ENCODE measurements at regions of chr5 and their contacts with region 1.

Region 1: DNA sequence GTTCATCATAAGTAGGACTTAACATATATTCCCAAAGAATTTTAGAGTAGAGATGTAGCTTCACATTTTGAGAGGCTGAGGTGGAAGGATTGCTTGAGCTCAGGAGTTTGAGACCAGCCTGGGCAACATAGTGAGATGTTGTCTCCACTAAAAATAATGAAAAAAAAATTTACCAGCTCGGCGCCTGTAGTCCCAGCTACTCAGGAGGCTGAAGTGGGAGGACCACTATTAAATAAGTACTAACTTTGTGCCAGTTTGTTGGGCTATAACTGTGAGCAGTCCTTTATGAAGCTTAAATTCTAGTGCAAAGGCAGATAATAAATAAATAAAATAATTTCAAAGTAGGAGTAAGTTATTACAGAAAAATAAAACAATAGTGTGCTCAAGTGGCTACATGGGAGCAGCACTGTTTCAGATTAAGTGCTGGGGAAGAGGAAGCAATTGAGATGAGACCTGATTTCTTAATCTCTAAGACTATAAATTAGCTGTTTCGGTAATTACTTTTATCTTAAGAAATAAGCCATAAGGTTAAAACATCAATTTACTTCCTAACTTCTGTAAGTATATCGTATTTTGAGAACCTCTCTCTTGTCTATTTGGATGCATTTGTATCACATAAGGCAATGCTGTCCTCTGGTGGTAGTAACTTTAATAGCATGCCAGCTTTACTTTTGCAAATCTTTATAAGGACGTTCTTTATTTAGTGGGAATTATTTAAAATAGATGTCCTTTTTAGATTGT is 98.9 kb downstream of the CSNK1G3 start:
- DNase-seq: peak; percentile 80
- H3K4me3 Mint-ChIP-seq: no peak overlapping the region
- H3K27ac Mint-ChIP-seq: no peak overlapping the region
- H3K4me1 Mint-ChIP-seq: peaks cover 9% of the 10 kb centered on the region
- H3K27me3 Mint-ChIP-seq: no peaks in the 10 kb centered on the region

Region 2: DNA sequence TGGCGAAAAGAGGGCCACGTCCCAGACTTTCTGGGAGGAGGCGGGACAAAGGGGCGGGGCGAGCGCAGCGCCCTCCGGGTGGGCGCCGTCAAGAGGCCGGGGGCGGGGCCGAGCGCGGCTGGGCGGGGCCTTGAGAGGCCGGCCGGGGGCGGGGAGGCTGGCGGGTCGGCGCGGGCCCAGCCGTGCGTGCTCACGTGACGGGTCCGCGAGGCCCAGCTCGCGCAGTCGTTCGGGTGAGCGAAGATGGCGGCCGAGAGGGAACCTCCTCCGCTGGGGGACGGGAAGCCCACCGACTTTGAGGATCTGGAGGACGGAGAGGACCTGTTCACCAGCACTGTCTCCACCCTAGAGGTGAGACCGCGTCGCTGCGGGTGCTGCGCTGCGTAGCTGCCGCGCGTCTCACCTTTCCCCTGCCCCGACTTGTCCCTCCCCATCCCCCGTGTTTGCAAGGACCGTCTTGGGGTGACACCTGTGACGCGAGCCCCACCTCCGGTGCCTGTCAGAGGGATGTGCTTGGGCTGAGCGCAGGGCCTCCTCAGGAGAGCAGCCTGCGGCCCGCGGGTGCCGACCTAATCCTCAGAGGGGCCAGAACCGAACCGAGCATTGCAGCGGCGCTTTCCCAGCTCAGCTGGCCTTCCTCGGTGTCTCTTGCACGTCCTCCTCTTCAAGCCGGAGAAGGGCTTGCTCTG is 835.8 kb before region 1 on chr5 and contains the start of gene SNX2:
- intact Hi-C with region 1: loop called (anchors 10 kb)
- DNase-seq: peak; percentile 95
- H3K4me3 Mint-ChIP-seq: peak within 1 kb of the TSS; percentile 94
- H3K27ac Mint-ChIP-seq: peak within 1 kb of the TSS; percentile 86
- H3K4me1 Mint-ChIP-seq: peaks cover 16% of the 10 kb centered on the region
- H3K27me3 Mint-ChIP-seq: peaks cover 23% of the 10 kb centered on the region
- total RNA-seq, gene SNX2: 33.8 and 36.5 TPM in 2 replicates

Region 3: GRCh38 chr5:123367739-123368138 is 243.1 kb before region 1 on chr5:
- intact Hi-C with region 1: loop called (anchors 10 kb)
- DNase-seq: no peak
- H3K4me3 Mint-ChIP-seq: no peak overlapping the region
- H3K27ac Mint-ChIP-seq: no peak overlapping the region
- H3K4me1 Mint-ChIP-seq: no peaks in the 10 kb centered on the region
- H3K27me3 Mint-ChIP-seq: no peaks in the 10 kb centered on the region

Region 4: DNA sequence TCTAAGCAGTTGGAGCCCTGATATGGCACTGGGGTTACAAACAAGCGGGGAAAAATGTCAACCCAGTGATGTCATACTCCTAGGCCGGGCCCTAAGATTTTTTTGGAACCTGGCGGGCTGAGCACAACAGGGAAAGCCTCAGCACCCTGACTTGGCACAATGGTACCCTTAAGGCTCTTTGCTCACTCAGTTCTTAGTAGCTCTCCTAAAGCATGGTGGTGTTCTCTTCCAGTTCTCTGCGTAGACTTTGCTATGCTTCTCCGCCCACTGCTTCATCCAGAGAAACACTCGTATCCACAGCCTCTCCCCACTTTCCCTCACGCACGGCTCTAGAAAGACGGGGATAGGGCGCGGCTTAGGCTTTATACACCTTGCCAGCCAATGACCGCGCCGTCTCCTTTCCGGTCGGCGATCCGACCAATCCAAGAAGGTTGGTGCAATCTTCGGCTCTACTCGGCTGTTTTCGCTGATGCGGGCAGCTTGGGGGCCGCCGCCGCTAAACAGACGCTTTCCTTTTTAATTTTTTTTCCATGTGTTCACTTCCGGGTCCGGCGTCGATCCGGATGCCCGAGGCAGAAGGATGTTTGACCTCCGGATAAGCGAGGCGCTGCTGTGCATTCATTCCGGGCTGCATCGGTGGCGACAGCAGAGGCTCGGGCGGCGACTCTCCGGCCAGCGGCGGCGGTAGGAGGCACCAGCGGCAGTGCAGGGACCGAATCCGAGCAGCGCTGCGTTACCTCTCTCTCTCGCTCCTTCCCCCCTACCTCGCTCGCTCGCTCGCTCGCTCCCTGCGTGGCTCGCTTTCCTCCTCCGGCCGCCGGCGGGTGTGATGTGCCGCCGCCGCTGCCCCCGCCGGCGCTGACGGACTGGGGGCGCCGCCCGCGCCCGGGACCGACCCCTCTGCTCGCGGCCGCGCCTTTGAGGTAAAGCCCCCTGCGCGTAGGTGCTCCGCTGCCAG is 98.9 kb before region 1 on chr5 and contains the start of gene CSNK1G3:
- intact Hi-C with region 1: loop called (anchors 5 kb)
- DNase-seq: peak; percentile 97
- H3K4me3 Mint-ChIP-seq: peak within 1 kb of the TSS; percentile 90
- H3K27ac Mint-ChIP-seq: peak within 1 kb of the TSS; percentile 99
- H3K4me1 Mint-ChIP-seq: peaks cover 35% of the 10 kb centered on the region
- H3K27me3 Mint-ChIP-seq: peaks cover 11% of the 10 kb centered on the region
- total RNA-seq, gene CSNK1G3: 36.6 and 40.0 TPM in 2 replicates

Measured in activated CD4-positive, alpha-beta T cell treated with anti-CD3 and anti-CD28 coated beads, Interleukin-2, amount 10 ng/mL, durations not matched to agents 24 days and 14 days (primary cell).